Endothelial cell of umbilical vein (primary cell): ENCODE measurements at regions of chr5 and their contacts with region 1.

Region 1: DNA sequence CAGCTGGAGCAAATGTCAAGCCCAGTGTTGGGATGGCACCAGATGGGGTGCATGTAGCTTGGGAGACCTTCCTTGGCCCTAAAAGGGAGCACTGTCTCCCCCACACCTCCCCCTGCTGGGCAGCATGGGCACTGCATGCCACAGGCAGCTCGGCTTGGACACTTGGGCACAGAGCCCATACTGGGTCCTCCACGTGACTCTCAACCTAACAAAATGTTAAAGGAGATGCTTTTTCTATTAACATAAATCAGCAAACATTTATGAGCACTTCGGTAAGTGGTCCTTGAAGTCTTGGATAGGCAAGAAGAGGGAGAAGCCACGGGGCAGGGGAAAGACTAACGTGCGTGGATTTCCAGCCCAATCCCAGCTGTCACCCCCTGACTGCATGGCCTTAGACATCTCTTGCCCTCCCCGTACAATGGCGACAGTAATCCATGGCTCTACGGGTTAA is 23.9 kb upstream of the MAPK9 start:
- DNase-seq: peak; percentile 58
- H3K4me3 ChIP-seq: no peak overlapping the region
- H3K27ac ChIP-seq: no peak overlapping the region
- H3K4me1 ChIP-seq: peaks cover 2% of the 10 kb centered on the region
- H3K27me3 ChIP-seq: no peaks in the 10 kb centered on the region
- CTCF ChIP-seq: peak; percentile 96 to 98
- POLR2A ChIP-seq: no peak

Region 2: GRCh38 chr5:180126726-180127681 is 188.8 kb before region 1 on chr5:
- CTCF ChIA-PET with region 1: interaction called, 27 read pairs
- POLR2A ChIA-PET with region 1: no interaction called
- dilution Hi-C with region 1: no loop called
- intact Hi-C with region 1: loop called (anchors 1 kb)
- DNase-seq: no peak
- H3K4me3 ChIP-seq: no peak overlapping the region
- H3K27ac ChIP-seq: no peak overlapping the region
- H3K4me1 ChIP-seq: no peaks in the 10 kb centered on the region
- H3K27me3 ChIP-seq: peaks cover 0 to 2% of the 10 kb centered on the region in 2 experiments
- CTCF ChIP-seq: peak; percentile 70 to 84
- POLR2A ChIP-seq: no peak

Region 3: DNA sequence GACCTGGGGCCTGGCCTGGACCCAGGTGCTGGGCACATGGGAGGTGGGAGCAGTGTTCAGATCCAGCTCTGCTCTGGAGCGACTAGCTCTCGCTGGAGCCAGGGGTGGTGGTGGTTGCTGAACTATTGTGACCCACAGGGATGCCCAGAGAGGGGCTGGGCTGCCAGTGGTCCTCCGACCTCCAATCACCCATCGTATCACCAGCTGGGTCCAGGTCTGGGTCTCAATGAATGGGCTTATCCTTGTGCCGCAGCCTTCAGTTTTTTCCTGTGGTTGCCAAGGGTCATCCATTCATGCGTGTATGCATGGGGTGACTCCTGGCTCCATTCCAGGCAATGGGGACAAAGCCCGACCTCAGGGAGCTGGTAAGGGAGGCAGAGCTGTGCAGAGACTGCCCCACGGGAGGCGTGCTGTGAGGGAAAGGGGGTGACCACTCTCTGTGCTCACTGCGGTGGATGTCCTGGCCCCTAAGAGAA is 175.7 kb before region 1 on chr5:
- CTCF ChIA-PET with region 1: no interaction called
- POLR2A ChIA-PET with region 1: no interaction called
- dilution Hi-C with region 1: no loop called
- intact Hi-C with region 1: no loop called
- DNase-seq: no peak
- H3K4me3 ChIP-seq: no peak overlapping the region
- H3K27ac ChIP-seq: no peak overlapping the region
- H3K4me1 ChIP-seq: no peaks in the 10 kb centered on the region
- H3K27me3 ChIP-seq: no peaks in the 10 kb centered on the region
- CTCF ChIP-seq: no peak
- POLR2A ChIP-seq: no peak

Region 4: GRCh38 chr5:180201051-180201987 is 114.5 kb before region 1 on chr5:
- CTCF ChIA-PET with region 1: interaction called, 27 read pairs
- POLR2A ChIA-PET with region 1: no interaction called
- dilution Hi-C with region 1: no loop called
- intact Hi-C with region 1: loop called (anchors 1 kb)
- DNase-seq: peak; percentile 40
- H3K4me3 ChIP-seq: no peak overlapping the region
- H3K27ac ChIP-seq: no peak overlapping the region
- H3K4me1 ChIP-seq: no peaks in the 10 kb centered on the region
- H3K27me3 ChIP-seq: no peaks in the 10 kb centered on the region
- CTCF ChIP-seq: peak; percentile 26 to 35
- POLR2A ChIP-seq: no peak

Region 5: GRCh38 chr5:180209137-180209581 is 106.6 kb before region 1 on chr5 and contains the start of gene RASGEF1C:
- CTCF ChIA-PET with region 1: interaction called, 10 read pairs
- POLR2A ChIA-PET with region 1: no interaction called
- dilution Hi-C with region 1: no loop called
- intact Hi-C with region 1: no loop called
- DNase-seq: peak; percentile 40
- H3K4me3 ChIP-seq: peak within 1 kb of the TSS in 1 of 3 experiments; percentile 27
- H3K27ac ChIP-seq: no peak within 1 kb of the TSS
- H3K4me1 ChIP-seq: peaks cover 3% of the 10 kb centered on the region
- H3K27me3 ChIP-seq: peaks cover 10 to 21% of the 10 kb centered on the region in 2 experiments
- CTCF ChIP-seq: peak; percentile 36 to 46
- POLR2A ChIP-seq: no peak
- total RNA-seq, gene RASGEF1C: not detected in 2 replicates

Region 6: DNA sequence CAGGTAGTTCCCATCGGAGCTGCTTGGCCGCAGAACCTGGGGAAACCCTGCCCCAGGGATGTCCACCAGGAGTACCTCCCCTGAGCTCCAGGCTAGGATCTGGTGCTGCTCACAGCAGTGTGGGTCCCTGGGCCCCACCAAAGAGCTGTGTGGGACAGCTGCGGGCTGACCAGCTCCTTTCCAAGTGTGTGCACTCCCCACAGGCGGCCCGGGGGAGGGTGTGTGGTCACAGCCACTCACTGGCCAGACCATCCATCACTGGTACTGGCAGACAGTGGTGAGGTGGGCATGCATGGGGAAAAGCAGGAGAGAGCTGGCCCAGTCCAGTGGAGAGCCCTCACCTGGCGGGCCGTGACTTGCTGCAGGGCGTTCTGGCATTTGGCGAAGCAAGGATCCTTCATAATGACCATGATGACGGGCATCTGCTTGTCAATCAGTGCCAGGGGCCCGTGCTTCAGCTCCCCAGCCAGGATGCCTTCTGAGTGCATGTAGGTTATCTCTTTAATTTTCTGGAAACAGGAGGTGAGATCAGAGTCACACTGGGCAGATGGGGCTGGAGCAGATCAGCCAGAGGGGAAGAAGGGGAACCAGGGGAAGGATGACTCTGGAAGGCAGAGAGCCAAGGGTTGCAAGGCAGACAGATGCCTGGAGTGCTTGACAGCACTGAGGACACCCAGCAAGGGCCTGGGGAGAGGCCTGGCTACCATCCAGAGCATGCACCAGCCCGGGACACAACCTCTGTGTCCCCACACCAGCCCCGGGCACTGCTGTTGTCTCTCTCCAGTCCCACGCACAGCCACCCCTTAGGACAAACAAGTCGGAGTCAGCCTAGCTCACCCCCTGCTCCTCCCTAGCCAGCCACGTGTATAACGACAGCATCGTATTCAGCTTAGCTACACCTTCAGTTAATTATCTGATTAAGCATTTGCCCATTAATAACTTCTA is 11.1 kb before region 1 on chr5:
- CTCF ChIA-PET with region 1: interaction called, 21 read pairs
- POLR2A ChIA-PET with region 1: no interaction called
- dilution Hi-C with region 1: no loop called
- intact Hi-C with region 1: no loop called
- DNase-seq: no peak
- H3K4me3 ChIP-seq: no peak overlapping the region
- H3K27ac ChIP-seq: no peak overlapping the region
- H3K4me1 ChIP-seq: no peaks in the 10 kb centered on the region
- H3K27me3 ChIP-seq: no peaks in the 10 kb centered on the region
- CTCF ChIP-seq: no peak
- POLR2A ChIP-seq: no peak

Region 7: DNA sequence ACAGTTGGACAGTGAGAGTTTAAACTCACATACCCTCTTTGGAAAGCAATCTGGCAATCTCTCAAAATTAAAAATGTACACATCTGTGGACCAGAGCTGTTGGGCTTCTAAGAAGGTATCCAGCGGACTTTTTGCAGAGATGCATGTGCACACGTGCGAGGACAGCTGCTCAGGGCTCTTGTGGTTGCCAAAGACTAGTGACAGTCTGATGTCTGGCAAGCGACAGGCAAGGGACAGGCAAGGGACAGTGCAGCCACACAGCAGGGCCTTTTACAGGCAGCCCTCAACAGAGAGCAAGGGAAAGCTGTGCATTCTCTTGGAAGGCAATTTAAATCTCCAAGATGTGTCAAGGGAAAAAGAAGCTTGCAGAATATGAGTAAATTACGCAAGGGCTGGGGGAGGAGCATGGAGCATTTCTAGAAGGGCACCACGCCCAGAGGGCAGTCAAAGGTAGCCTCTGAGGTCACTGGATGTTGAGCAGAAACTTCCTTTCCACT is 28.1 kb after region 1 on chr5:
- CTCF ChIA-PET with region 1: interaction called, 10 read pairs
- POLR2A ChIA-PET with region 1: no interaction called
- dilution Hi-C with region 1: no loop called
- intact Hi-C with region 1: no loop called
- DNase-seq: no peak
- H3K4me3 ChIP-seq: no peak overlapping the region
- H3K27ac ChIP-seq: no peak overlapping the region
- H3K4me1 ChIP-seq: no peaks in the 10 kb centered on the region
- H3K27me3 ChIP-seq: peaks cover 0 to 2% of the 10 kb centered on the region in 2 experiments
- CTCF ChIP-seq: no peak
- POLR2A ChIP-seq: no peak

Region 8: GRCh38 chr5:180380856-180381255 is 65.1 kb after region 1 on chr5:
- CTCF ChIA-PET with region 1: no interaction called
- POLR2A ChIA-PET with region 1: no interaction called
- dilution Hi-C with region 1: no loop called
- intact Hi-C with region 1: no loop called
- DNase-seq: no peak
- H3K4me3 ChIP-seq: no peak overlapping the region
- H3K27ac ChIP-seq: no peak overlapping the region
- H3K4me1 ChIP-seq: no peaks in the 10 kb centered on the region
- H3K27me3 ChIP-seq: no peaks in the 10 kb centered on the region
- CTCF ChIP-seq: no peak
- POLR2A ChIP-seq: no peak

Region 9: GRCh38 chr5:180636403-180637075 is 320.8 kb after region 1 on chr5:
- CTCF ChIA-PET with region 1: no interaction called
- POLR2A ChIA-PET with region 1: no interaction called
- dilution Hi-C with region 1: no loop called
- intact Hi-C with region 1: no loop called
- DNase-seq: peak; percentile 38
- H3K4me3 ChIP-seq: no peak overlapping the region
- H3K27ac ChIP-seq: no peak overlapping the region
- H3K4me1 ChIP-seq: no peaks in the 10 kb centered on the region
- H3K27me3 ChIP-seq: no peaks in the 10 kb centered on the region
- CTCF ChIP-seq: no peak
- POLR2A ChIP-seq: no peak